RWPE1 (cell line): ENCODE measurements at regions of chrX and their contacts with region 1.

Region 1: DNA sequence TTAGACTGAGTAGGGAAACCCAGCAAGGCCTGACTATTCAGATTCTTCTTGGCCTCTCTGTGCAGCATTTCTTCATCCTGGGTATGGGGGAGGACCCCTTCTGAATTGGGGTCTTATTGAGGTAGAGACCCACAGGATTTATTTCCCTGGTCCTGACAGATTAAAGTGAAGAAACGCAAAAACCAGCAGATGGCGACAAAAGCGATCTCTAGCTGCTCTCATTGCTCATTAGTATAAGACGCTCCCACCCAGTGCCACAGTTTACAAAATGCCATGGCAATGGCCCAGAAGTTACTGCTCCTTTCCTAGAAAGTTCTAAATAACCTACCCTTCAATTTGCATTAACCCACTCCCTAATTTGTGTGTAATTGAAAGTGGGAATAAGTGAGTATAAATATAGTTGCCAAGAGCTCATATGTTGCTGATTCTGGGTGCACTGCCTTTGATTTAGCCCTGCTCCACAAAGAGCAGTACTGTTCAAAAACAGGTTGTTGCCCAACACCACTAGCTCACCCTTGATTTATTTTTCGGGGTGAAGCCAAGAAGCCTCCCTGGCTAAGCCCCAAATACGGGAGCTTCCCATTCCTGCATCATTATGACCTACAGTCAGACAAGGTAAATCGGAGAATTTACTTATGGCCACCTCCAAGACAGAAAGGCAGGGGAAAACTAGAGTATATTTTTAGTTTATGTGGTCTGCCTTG is 3.7 kb upstream of the BEX4 start:
- DNase-seq: peak; percentile 15
- H3K27ac ChIP-seq: no peak overlapping the region
- CTCF ChIP-seq: peak; percentile 51

Region 2: DNA sequence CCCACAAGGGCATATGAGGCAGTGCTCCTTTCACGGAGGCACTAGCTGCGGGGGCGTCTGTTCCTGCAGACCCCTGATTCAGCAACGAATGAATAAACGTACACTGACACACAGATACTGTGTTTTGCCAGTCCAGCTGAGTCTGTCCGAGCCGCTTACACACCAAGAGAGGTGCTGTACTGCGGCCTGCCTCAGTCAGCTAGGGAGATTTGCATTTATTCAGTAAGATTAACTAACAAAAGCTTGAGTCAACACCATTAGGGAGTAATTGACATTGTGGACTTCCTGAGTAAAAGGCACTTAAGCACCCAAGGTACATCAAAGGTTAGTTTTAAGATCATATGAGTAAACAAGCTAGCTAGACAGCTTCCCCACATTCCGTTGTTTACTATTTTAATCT is 27.3 kb before region 1 on chrX:
- CTCF ChIA-PET with region 1: no interaction called
- POLR2A ChIA-PET with region 1: no interaction called
- DNase-seq: no peak
- H3K27ac ChIP-seq: no peak overlapping the region
- CTCF ChIP-seq: no peak

Region 3: DNA sequence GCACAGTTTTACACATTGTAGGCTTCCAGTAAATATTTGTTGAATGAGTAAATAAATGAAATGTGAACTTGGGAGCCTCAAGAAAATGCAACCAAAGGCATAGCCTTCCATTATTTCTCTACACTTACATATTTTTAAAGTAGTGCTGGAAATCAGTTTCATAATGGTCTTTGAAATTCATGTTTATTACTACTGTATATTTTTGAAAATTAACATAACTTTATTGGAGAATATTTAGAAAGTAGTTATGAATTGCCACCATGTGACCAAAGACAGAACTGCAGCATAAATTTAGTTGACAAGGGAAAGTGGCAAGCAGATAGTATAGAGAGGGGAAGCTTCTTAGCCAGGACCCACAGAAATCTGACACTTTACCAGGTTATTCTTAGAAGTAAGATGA is 37.4 kb after region 1 on chrX:
- CTCF ChIA-PET with region 1: interaction called, 13 read pairs
- POLR2A ChIA-PET with region 1: interaction called, 3 read pairs
- DNase-seq: no peak
- H3K27ac ChIP-seq: no peak overlapping the region
- CTCF ChIP-seq: peak; percentile 46